H1 (cell line): ENCODE measurements at regions of chr22 and their contacts with region 1.

Region 1: GRCh38 chr22:22463855-22464540 is 44.5 kb downstream of the ZNF280B start:
- DNase-seq: peak in 1 of 2 experiments; percentile 79
- H3K4me3 ChIP-seq: peak overlapping the region in 1 of 4 experiments; percentile 37; a peak in 1 of 8 replicates
- H3K27ac ChIP-seq: no peak overlapping the region
- H3K4me1 ChIP-seq: peaks cover 0 to 18% (median 3%) of the 10 kb centered on the region in 4 experiments; a peak in 3 of 7 replicates
- H3K27me3 ChIP-seq: peaks cover 3 to 26% (median 18%) of the 10 kb centered on the region in 4 experiments; a peak in 5 of 7 replicates
- CTCF ChIP-seq: peak; percentile 15 to 85 (median 66)
- EP300 ChIP-seq: no peak
- POLR2A ChIP-seq: no peak
- RAD21 ChIP-seq: peak; percentile 91

Region 2: DNA sequence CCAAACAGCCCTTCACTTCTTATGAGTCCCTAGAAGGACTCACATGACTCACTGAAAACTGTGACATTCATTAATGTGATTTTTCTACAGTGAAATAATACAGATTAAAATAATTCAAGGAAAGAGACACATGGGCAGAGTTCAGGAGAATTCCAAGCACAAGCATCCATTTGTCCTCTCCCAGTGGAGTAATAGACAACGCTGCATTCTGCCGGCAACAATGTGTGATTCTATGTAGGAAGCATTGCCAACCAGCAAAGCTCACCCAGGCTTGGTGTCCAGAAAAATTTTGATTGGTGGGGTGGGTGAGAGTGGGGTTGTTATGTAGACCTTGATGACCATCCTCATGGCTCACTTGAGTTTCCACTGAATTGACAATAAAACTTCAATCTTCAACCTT is 95.5 kb before region 1 on chr22:
- CTCF ChIA-PET with region 1: no interaction called
- POLR2A ChIA-PET with region 1: no interaction called
- DNase-seq: no peak
- H3K4me3 ChIP-seq: no peak overlapping the region
- H3K27ac ChIP-seq: no peak overlapping the region
- H3K4me1 ChIP-seq: no peaks in the 10 kb centered on the region
- H3K27me3 ChIP-seq: peaks cover 79 to 100% (median 98%) of the 10 kb centered on the region in 4 experiments
- CTCF ChIP-seq: no peak
- EP300 ChIP-seq: no peak
- POLR2A ChIP-seq: no peak
- RAD21 ChIP-seq: no peak

Region 3: DNA sequence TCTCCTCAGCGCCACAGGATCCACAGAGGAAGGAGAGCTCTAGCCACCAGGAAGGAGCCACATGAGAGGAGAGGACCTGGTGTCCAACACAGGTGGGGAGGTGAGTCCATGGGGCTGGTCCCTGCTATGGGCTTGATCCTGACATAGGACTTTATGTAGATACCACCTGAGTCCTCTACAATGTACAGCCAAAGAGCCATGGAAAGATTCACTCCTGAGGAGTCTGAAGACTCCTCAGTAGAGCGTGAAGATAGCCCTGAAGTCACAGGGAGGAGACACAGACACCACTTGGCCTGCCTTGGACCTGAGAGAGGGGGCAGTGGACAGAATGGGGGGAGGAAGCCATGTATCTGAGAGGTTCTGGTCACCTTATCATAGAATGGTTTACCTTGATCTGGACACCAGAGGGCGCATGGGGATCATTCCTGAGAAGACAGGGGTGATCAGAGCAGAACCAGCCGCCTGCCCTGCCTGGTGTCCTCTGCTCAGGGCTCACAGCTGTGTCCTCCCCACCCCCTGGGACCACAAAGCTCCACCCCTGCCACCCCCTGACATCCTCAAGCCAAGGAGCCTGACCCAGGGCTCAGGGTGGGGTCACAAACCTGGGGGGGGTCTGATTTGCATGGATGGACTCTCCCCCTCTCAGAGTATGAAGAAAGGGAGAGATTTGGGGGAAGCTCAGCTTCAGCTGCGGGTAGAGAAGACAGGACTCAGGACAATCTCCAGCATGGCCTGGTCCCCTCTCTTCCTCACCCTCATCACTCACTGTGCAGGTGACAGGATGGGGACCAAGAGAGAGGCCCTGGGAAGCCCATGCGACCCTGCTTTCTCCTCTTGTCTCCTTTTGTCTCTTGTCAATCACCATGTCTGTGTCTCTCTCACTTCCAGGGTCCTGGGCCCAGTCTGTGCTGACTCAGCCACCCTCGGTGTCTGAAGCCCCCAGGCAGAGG is 32.5 kb before region 1 on chr22:
- CTCF ChIA-PET with region 1: interaction called, 52 read pairs
- POLR2A ChIA-PET with region 1: no interaction called
- DNase-seq: peak in 1 of 2 experiments; percentile 89
- H3K4me3 ChIP-seq: no peak overlapping the region
- H3K27ac ChIP-seq: no peak overlapping the region
- H3K4me1 ChIP-seq: no peaks in the 10 kb centered on the region
- H3K27me3 ChIP-seq: peaks cover 54 to 95% (median 82%) of the 10 kb centered on the region in 4 experiments
- CTCF ChIP-seq: peak; percentile 57 to 76 (median 69)
- EP300 ChIP-seq: no peak
- POLR2A ChIP-seq: no peak
- RAD21 ChIP-seq: peak; percentile 66 to 73

Region 4: DNA sequence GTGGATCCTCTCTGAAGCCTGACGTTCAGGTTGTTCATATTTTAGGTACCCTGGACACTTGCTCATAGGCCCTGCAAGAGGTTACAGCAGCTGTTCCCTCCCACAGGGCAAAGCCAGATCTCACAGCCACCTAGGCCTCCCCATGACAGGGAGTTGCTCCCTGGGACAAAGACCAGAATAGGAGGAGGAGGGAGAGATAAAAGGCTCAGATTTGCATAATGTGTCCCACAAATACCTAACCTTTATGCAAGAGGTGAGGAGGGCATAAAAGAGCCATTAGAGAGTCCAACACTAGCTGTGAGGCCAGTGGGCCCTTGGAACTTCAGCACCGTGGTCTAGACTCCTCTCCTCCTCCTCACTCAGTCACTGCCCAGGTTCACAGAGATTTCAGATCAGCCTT is 10.7 kb after region 1 on chr22:
- CTCF ChIA-PET with region 1: interaction called, 45 read pairs
- POLR2A ChIA-PET with region 1: no interaction called
- DNase-seq: no peak
- H3K4me3 ChIP-seq: no peak overlapping the region
- H3K27ac ChIP-seq: no peak overlapping the region
- H3K4me1 ChIP-seq: peaks cover 0 to 7% (median 3%) of the 10 kb centered on the region in 4 experiments; a peak in 5 of 7 replicates
- H3K27me3 ChIP-seq: peaks cover 0 to 19% (median 0%) of the 10 kb centered on the region in 4 experiments; a peak in 3 of 7 replicates
- CTCF ChIP-seq: no peak
- EP300 ChIP-seq: no peak
- POLR2A ChIP-seq: no peak
- RAD21 ChIP-seq: no peak

Region 5: DNA sequence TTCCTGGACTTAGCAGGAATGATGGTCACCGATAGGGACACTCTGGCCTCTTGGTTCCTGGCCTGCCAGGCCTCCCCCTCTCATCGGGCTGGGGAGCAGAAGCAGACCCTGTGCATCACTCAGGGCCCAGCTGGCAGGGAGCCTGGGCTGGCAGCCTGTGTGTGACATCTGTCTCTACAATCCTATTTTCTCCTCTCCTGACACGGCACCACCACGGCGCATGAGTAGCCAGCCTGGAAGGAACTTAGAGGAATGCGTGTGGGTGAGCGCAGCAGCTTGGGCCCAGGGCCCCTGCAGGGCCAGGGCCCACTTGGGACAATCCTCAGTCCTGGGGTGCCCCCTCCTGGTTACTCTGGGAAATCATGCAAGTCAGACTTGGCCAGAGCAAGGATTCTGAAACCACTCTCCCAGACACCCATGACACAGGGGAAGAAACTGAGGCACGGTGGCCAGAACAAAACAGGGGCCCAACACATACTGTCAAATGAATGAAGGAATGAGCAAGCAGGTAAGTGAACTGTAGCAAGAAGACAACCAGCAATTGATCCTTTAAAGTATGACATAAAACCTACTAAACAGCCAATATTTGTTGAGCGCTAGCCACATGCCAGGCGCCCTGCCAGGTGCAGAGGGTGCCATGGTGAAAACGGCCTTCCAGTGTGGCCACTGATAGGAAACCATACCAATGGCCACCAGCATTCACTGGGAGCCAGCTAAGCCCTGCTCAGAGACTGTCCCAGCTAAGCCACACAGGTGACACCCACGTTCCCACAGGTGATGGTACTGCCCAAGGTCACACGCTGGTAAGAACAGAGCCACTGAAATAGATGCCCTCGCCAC is 664.5 kb after region 1 on chr22:
- CTCF ChIA-PET with region 1: interaction called, 27 read pairs
- POLR2A ChIA-PET with region 1: no interaction called
- DNase-seq: peak; percentile 70 to 96
- H3K4me3 ChIP-seq: no peak overlapping the region
- H3K27ac ChIP-seq: no peak overlapping the region
- H3K4me1 ChIP-seq: peaks cover 0 to 1% (median 0%) of the 10 kb centered on the region in 4 experiments; a peak in 1 of 7 replicates
- H3K27me3 ChIP-seq: peaks cover 0 to 5% (median 3%) of the 10 kb centered on the region in 4 experiments; a peak in 3 of 7 replicates
- CTCF ChIP-seq: peak; percentile 76 to 98 (median 85)
- EP300 ChIP-seq: no peak
- POLR2A ChIP-seq: no peak
- RAD21 ChIP-seq: peak; percentile 98 to 99